ENCODE measurements at regions of chrX and their contacts with region 1.

Region 1: DNA sequence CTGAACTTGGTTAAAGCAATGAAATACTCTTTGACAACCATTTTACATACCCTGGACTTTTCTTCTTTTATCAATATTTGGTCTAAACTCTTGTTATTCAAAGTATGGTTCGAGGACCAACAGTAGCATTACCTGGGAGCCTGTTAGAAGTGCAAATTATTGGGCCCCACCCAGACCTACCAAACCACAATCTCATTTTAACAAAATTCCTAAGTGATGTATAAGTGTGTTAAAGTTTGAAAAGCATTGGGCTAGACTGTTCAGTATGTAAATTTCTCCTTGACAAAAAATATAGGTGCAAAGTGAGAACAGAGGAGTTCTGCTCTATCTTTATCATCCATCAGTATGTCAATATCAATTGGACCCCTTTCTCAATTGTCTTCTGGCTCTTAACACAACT is 67.1 kb downstream of the PGRMC1 start:
- DNase-seq: no peak
- ATAC-seq: no peak
- H3K4me3 ChIP-seq: no peak overlapping the region
- H3K27ac ChIP-seq: no peak overlapping the region
- H3K4me1 ChIP-seq: no peaks in the 10 kb centered on the region
- H3K27me3 ChIP-seq: peaks cover 2% of the 10 kb centered on the region; the same call in 1 of the 2 replicates
- CTCF ChIP-seq: no peak

Region 2: DNA sequence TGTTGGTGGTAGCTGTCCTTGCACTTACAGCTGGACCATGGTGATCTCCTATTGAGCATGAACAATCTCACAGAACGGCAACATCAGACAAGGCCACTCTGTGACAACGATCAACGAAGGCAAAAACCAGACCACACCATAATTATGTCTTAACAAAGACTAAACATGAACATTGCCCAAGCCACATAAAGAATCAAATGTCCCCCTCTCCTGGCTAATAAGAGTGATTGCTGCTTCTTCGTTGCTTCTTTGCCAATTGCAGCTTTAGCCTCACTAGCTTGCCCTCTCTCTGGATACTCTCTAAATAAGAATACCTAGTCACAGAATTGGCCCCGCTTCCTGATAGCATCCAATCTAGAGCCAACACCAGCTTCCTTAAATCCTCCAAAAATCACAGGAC is 108.5 kb before region 1 on chrX:
- CTCF ChIA-PET with region 1: no interaction called
- POLR2A ChIA-PET with region 1: no interaction called
- in situ Hi-C with region 1: no loop called
- intact Hi-C with region 1: no loop called
- DNase-seq: no peak
- ATAC-seq: no peak
- H3K4me3 ChIP-seq: no peak overlapping the region
- H3K27ac ChIP-seq: no peak overlapping the region
- H3K4me1 ChIP-seq: no peaks in the 10 kb centered on the region
- H3K27me3 ChIP-seq: no peaks in the 10 kb centered on the region; the same call in 1 of the 2 replicates
- CTCF ChIP-seq: peak; percentile 24

Region 3: GRCh38 chrX:119240356-119240755 is 62.8 kb before region 1 on chrX:
- CTCF ChIA-PET with region 1: no interaction called
- POLR2A ChIA-PET with region 1: no interaction called
- in situ Hi-C with region 1: no loop called
- intact Hi-C with region 1: loop called (anchors 10 kb)
- DNase-seq: no peak
- ATAC-seq: no peak
- H3K4me3 ChIP-seq: no peak overlapping the region
- H3K27ac ChIP-seq: no peak overlapping the region
- H3K4me1 ChIP-seq: peaks cover 16% of the 10 kb centered on the region
- H3K27me3 ChIP-seq: no peaks in the 10 kb centered on the region
- CTCF ChIP-seq: no peak